Endothelial cell of umbilical vein (primary cell): ENCODE measurements at regions of chr7 and their contacts with region 1.

Region 1: GRCh38 chr7:91628742-91629141 is 251.8 kb downstream of the MTERF1 start:
- DNase-seq: peak; percentile 77
- H3K4me3 ChIP-seq: no peak overlapping the region
- H3K27ac ChIP-seq: peak overlapping the region; percentile 41
- H3K4me1 ChIP-seq: peaks cover 22% of the 10 kb centered on the region
- H3K27me3 ChIP-seq: no peaks in the 10 kb centered on the region
- CTCF ChIP-seq: no peak
- POLR2A ChIP-seq: no peak

Region 2: GRCh38 chr7:91310830-91311460 is 317.8 kb before region 1 on chr7:
- CTCF ChIA-PET with region 1: no interaction called
- POLR2A ChIA-PET with region 1: no interaction called
- dilution Hi-C with region 1: no loop called
- intact Hi-C with region 1: no loop called
- DNase-seq: no peak
- H3K4me3 ChIP-seq: no peak overlapping the region
- H3K27ac ChIP-seq: no peak overlapping the region
- H3K4me1 ChIP-seq: no peaks in the 10 kb centered on the region
- H3K27me3 ChIP-seq: no peaks in the 10 kb centered on the region
- CTCF ChIP-seq: no peak
- POLR2A ChIP-seq: no peak

Region 3: GRCh38 chr7:91465595-91466061 is 163.1 kb before region 1 on chr7:
- CTCF ChIA-PET with region 1: interaction called, 3 read pairs
- POLR2A ChIA-PET with region 1: no interaction called
- dilution Hi-C with region 1: no loop called
- intact Hi-C with region 1: loop called (anchors 5 kb)
- DNase-seq: peak; percentile 93
- H3K4me3 ChIP-seq: no peak overlapping the region
- H3K27ac ChIP-seq: peak overlapping the region; percentile 75
- H3K4me1 ChIP-seq: peaks cover 25% of the 10 kb centered on the region
- H3K27me3 ChIP-seq: no peaks in the 10 kb centered on the region
- CTCF ChIP-seq: no peak
- POLR2A ChIP-seq: no peak

Region 4: GRCh38 chr7:91731976-91732375 is 103.2 kb after region 1 on chr7:
- CTCF ChIA-PET with region 1: no interaction called
- POLR2A ChIA-PET with region 1: no interaction called
- dilution Hi-C with region 1: no loop called
- intact Hi-C with region 1: no loop called
- DNase-seq: no peak
- H3K4me3 ChIP-seq: no peak overlapping the region
- H3K27ac ChIP-seq: no peak overlapping the region
- H3K4me1 ChIP-seq: no peaks in the 10 kb centered on the region
- H3K27me3 ChIP-seq: no peaks in the 10 kb centered on the region
- CTCF ChIP-seq: no peak
- POLR2A ChIP-seq: no peak